Dorsolateral prefrontal cortex (tissue), 120 donors: ENCODE measurements at regions of chr2 and their contacts with region 1.

Region 1: GRCh38 chr2:101341901-101342624 is 33.6 kb upstream of the RNF149 start:
- DNase-seq: peak; percentile 46 to 86 (median 79)
- H3K4me3 ChIP-seq: peak overlapping the region in 12 of 59 donors; percentile 8 to 31 (median 18)
- H3K27ac ChIP-seq: peak overlapping the region in 14 of 59 donors; percentile 7 to 87 (median 36)
- H3K27me3 ChIP-seq: no peaks in the 10 kb centered on the region
- CTCF ChIP-seq: peak; percentile 65 to 94 (median 87)

Region 2: GRCh38 chr2:101249826-101250225 is 92.2 kb before region 1 on chr2:
- intact Hi-C with region 1: no loop called
- DNase-seq: no peak
- H3K4me3 ChIP-seq: no peak overlapping the region
- H3K27ac ChIP-seq: no peak overlapping the region
- H3K27me3 ChIP-seq: no peaks in the 10 kb centered on the region
- CTCF ChIP-seq: no peak

Region 3: GRCh38 chr2:101308432-101309210 is 33.4 kb before region 1 on chr2 and contains the start of gene RNF149:
- intact Hi-C with region 1: loop called in 1 of 2 experiments (anchors 5 kb)
- DNase-seq: peak; percentile 76 to 95 (median 89)
- H3K4me3 ChIP-seq: peak within 1 kb of the TSS; percentile 70 to 100 (median 92)
- H3K27ac ChIP-seq: peak within 1 kb of the TSS; percentile 67 to 97 (median 91)
- H3K27me3 ChIP-seq: no peaks in the 10 kb centered on the region
- CTCF ChIP-seq: peak in 33 of 56 donors; percentile 10 to 64 (median 26)
- total RNA-seq, gene RNF149: 30.6 to 66.5 (median 47.5) TPM

Region 4: DNA sequence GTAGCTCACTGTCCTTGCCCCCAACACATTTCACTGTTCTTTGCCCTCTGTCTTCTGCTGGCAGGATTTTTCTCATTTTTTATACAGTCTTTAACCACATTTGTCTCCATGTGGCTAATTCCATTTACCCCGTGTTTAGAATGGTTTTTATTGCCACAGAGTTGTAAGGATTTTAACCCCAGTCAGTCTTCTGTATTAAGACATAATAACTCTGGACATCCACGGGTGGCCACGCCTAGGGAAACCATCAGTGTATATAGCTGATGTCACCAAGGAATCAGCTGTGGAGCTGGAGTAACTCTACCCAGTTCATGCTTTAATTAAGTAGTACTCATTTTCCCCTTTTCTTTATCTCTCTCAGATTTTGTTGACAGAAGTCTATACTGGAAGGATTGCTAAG is 495.3 kb after region 1 on chr2:
- intact Hi-C with region 1: loop called in 1 of 2 experiments (anchors 5 kb)
- DNase-seq: no peak
- H3K4me3 ChIP-seq: no peak overlapping the region
- H3K27ac ChIP-seq: peak overlapping the region in 36 of 59 donors; percentile 4 to 74 (median 43)
- H3K27me3 ChIP-seq: no peaks in the 10 kb centered on the region
- CTCF ChIP-seq: no peak